Prostate gland (tissue), 2 donors: ENCODE measurements at regions of chr3 and their contacts with region 1.

Region 1: GRCh38 chr3:177516158-177517011 is 319.1 kb upstream of the TBL1XR1 start:
- DNase-seq: no peak
- H3K4me3 ChIP-seq: no peak overlapping the region
- H3K27ac ChIP-seq: peak overlapping the region in 1 of 2 donors; percentile 17
- H3K4me1 ChIP-seq: peaks cover 4% of the 10 kb centered on the region
- H3K27me3 ChIP-seq: no peaks in the 10 kb centered on the region
- CTCF ChIP-seq: no peak
- POLR2A ChIP-seq: no peak

Region 2: DNA sequence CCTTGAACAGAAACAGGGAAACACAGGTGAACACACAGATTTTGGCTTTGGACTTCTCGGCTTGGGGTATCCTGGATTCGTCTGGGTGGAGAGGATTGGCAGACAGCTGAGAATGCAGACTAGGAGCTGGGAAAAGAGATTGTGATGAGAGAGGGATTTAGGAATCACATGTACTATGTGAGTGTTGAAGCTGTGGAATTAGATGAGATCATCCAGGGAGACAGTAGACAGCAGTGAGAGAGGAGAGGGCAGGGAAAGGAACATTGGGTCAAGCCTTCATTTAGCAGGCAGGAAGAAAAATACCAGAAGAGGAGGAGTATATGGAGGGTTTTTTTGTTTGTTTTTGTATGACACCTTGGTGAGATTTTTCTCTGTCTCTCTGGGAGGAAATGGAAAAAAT is 57.0 kb before region 1 on chr3:
- intact Hi-C with region 1: loop called (anchors 5 kb)
- DNase-seq: no peak
- H3K4me3 ChIP-seq: no peak overlapping the region
- H3K27ac ChIP-seq: peak overlapping the region; percentile 22 to 58
- H3K4me1 ChIP-seq: peaks cover 1% of the 10 kb centered on the region
- H3K27me3 ChIP-seq: no peaks in the 10 kb centered on the region
- CTCF ChIP-seq: no peak
- POLR2A ChIP-seq: no peak

Region 3: GRCh38 chr3:177724020-177724638 is 207.7 kb after region 1 on chr3:
- intact Hi-C with region 1: no loop called
- DNase-seq: peak; percentile 35
- H3K4me3 ChIP-seq: no peak overlapping the region
- H3K27ac ChIP-seq: peak overlapping the region in 1 of 2 donors; percentile 5
- H3K4me1 ChIP-seq: peaks cover 6% of the 10 kb centered on the region
- H3K27me3 ChIP-seq: no peaks in the 10 kb centered on the region
- CTCF ChIP-seq: no peak
- POLR2A ChIP-seq: no peak